ENCODE measurements at regions of chr19 and their contacts with region 1.

Region 1: DNA sequence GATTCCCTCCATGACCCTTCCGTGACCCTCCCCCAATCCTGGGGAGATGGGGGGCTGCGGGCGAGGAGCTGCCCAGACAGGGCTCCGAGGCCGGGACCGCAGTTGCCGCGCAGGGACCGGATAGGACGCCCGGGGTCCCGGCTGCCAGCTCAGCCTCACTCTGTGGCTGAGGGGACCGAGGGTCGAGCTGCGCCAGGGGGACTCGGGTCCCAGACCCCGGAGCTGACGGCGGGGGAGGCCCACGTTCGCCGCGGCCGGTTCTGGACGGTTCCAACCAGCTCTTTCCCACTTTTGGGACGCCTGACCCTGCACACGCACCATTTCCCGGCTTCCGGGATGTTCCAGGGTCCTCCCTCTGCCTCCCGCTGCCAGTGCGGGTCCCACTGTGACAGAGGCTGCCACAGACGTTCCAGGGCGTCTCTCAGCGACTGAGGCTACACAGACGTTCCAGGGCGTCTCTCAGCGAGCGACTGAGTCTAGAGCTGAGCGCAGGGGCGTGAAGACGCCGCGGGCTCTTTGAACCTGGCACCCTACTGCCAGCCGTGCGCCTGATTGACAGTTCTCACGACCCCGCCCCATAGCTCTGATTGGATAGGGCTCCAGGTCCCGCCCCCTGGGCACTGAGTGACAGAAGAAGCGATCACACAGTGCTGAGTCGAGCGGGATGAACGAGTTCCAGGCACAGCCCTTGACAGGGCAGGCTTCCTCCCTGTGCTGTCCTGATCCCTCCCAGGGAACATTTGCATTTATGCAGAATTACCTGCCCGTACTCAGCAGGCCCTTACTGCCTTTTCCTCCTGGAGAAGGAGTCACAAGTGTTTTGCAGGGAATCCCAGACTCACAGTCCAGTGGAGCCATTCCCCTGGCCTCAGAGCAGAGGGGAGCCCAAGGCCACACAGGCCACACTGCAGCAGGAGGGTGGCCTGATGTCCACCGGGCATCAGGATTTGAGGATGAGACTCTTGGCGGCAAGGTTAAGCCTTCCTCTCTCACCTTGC is at the start of gene ZNF563:
- DNase-seq: peak; percentile 99
- H3K4me3 ChIP-seq: peak within 1 kb of the TSS; percentile 79
- H3K27ac ChIP-seq: peak within 1 kb of the TSS; percentile 70
- H3K4me1 ChIP-seq: peaks cover 24% of the 10 kb centered on the region
- CTCF ChIP-seq: no peak
- total RNA-seq, gene ZNF563: 3.2 and 5.9 TPM in 2 replicates

Region 2: DNA sequence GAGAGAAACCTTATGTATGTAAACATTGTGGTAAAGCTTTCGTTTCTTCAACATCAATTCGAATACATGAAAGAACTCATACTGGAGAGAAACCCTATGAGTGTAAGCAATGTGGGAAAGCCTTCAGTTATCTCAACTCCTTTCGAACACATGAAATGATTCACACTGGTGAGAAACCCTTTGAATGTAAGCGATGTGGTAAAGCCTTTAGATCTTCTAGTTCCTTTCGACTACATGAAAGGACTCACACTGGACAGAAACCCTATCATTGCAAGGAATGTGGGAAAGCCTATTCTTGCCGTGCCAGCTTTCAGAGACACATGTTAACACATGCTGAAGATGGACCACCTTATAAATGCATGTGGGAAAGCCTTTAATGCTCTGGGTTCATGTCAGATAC is 145.8 kb before region 1 on chr19:
- CTCF ChIA-PET with region 1: no interaction called
- POLR2A ChIA-PET with region 1: no interaction called
- intact Hi-C with region 1: no loop called
- DNase-seq: no peak
- H3K4me3 ChIP-seq: no peak overlapping the region
- H3K27ac ChIP-seq: no peak overlapping the region
- H3K4me1 ChIP-seq: no peaks in the 10 kb centered on the region
- CTCF ChIP-seq: no peak

Region 3: DNA sequence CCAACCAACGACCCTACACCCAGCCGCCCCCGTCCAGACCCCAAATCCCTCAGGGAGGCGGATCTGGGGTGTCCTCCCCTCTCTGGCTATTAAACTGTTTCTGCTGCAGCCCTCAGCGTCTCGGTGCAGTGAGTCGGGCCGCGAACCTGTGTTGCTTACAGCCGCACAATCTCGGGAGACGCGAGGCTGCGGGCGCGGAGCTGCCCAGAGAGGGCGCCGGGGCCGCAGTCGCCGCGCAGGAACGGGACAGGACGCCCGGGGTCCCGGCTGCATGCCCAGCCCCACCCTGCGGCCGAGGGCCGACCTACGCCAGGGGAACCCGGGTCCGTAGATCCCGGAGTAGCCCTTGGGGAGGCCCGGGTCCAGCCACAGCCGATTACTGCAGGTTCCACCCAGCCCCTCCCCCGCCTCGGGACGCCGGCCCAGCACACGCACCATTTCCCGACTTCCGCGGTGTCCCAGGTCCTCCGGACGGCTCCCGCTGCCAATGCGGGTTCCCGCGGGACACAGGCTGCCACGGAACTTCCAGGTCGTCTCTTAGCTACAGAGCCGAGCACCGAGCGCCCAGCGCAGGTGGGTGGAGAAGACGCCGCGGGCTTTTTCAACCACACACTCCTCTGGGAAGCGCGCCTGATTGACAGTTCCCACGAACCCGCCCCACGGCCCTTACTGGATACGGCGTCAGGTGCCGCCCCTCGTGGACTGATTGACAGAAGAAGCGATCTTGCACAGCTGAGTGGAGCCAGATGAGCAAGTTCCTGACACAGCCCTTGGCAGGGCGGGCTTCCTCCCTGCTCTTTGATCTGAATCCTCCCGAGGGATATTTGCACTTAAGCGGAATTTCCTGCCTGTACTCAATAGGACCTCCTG is 67.4 kb after region 1 on chr19 and contains the start of gene ZNF799:
- CTCF ChIA-PET with region 1: no interaction called
- POLR2A ChIA-PET with region 1: no interaction called
- intact Hi-C with region 1: loop called (anchors 2 kb)
- DNase-seq: peak; percentile 95
- H3K4me3 ChIP-seq: peak within 1 kb of the TSS; percentile 95
- H3K27ac ChIP-seq: peak within 1 kb of the TSS; percentile 32
- H3K4me1 ChIP-seq: peaks cover 6% of the 10 kb centered on the region
- CTCF ChIP-seq: 0 out of 2 replicates have a peak, but pooled peaks have one; percentile 33
- total RNA-seq, gene ZNF799: 3.8 and 6.2 TPM in 2 replicates